ENCODE measurements at regions of chrX and their contacts with region 1.

Region 1: DNA sequence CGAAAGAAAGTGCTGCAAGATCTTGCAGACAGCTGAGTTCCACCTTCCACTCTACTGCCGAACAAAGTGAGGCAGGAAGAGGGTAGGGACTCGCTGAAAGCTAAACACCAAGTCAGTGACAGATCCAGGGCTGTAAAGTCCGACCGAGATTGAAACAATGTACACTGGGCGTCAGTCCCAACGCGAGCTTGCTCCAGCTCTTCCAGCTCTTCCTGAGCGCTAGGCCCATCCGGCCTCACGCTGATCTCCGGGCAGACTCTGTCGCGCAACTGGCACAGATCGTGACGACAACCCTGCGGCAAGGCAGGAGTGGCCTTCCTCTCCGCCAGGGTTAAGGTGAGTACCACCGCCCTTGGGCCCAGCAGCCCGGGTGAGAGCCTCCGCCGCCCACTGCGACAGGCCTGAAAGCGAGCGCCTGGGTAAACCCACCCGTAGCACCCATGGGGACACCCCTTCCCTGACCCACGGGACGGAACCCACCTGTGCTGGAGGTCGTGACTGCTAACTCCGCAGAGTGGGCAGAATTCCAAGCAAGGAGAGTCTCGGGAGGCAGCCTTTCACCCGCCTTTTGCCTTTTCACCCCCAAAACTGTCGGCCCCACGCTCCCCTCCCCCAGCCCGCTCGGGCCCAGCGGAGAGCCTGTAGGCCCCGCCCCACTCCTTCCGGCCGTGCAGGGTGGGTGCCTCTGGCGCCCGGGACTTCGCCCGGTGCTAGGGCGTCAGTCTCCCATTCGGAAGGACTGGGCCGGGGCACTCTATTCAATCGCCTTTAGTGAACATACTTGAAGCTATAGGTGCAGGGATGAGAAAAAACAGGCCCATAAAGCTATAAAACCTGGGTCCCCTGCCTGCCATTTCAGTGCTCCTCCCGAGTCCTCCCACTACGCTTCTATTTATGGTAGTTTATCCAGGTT is at the start of gene TMLHE:
- DNase-seq: peak; percentile 42
- H3K4me3 Mint-ChIP-seq: peak within 1 kb of the TSS; percentile 92
- H3K27ac Mint-ChIP-seq: peak within 1 kb of the TSS; percentile 92
- H3K4me1 Mint-ChIP-seq: peaks cover 5% of the 10 kb centered on the region
- H3K27me3 Mint-ChIP-seq: no peaks in the 10 kb centered on the region
- total RNA-seq, gene TMLHE: 7.3 and 9.9 TPM in 2 replicates

Region 2: DNA sequence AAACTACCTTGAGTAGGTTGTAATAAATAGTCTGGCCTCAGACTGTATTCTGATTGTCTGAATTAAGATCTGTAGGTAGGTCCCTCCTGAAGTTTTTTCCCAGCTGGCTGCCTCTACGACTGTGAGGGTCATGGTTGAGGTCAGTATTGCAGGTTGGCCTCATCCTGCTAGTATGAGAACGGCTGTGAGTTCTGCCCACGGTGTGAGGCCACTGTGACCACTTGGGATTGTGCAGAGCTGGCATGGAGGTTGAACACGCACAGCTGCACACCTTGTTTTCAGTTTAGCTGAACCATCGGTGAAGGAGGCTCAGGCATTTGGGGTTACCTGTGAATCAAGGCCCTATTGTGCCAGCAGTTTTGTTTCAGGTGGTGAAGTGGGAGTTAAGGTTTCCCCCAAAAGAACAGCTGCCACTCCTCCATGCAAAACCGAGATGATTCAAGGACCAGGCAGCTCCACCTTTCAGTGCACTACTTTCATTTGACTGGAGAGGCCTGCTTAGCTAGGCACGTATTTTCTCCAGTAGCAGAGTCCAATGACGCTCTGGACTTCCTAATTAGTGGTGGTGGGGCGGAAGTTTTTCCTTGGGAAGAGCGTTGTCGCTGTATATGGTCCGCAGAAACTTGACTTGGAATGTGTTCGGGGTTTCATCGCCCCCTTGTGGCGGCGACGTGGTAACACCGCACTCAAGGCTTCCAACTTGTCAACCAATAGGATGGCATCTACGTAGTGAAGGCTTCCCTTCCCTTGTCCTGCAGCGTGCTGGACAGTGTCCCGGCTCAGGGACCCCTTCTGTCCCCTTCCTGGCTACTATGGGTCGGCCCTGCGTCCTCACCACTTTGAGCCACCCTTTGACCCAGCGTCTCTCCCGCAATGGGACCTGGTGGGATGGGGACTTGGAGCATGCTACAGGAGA is 555.4 kb before region 1 on chrX:
- intact Hi-C with region 1: no loop called
- DNase-seq: peak; percentile 22
- H3K4me3 Mint-ChIP-seq: peak overlapping the region; percentile 62
- H3K27ac Mint-ChIP-seq: no peak overlapping the region
- H3K4me1 Mint-ChIP-seq: peaks cover 35% of the 10 kb centered on the region
- H3K27me3 Mint-ChIP-seq: no peaks in the 10 kb centered on the region

Region 3: GRCh38 chrX:155263854-155264628 is 348.5 kb before region 1 on chrX and contains the start of gene RAB39B:
- intact Hi-C with region 1: loop called (anchors 5 kb)
- DNase-seq: peak; percentile 61
- H3K4me3 Mint-ChIP-seq: peak within 1 kb of the TSS; percentile 91
- H3K27ac Mint-ChIP-seq: peak within 1 kb of the TSS; percentile 57
- H3K4me1 Mint-ChIP-seq: peaks cover 22% of the 10 kb centered on the region
- H3K27me3 Mint-ChIP-seq: no peaks in the 10 kb centered on the region
- total RNA-seq, gene RAB39B: 11.4 and 12.5 TPM in 2 replicates

Region 4: DNA sequence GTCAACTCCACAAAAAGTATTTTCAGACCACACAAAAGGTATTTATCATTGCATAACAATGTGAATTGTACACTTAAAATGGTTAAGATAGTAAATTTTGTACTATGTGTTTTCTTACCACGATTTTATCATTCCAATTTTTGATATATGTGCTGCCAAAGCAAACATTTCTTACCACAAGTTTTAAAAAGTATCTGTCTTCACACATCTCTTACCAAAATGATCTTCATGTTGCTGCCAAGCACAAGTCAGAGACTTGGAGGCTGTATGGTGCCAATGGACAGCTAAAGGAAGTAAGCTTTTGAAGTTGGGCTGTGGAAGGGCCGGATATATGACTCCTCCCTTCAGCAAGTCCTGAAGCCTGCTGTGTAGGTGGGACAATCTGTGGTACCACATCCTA is 67.7 kb before region 1 on chrX:
- intact Hi-C with region 1: no loop called
- DNase-seq: no peak
- H3K4me3 Mint-ChIP-seq: no peak overlapping the region
- H3K27ac Mint-ChIP-seq: no peak overlapping the region
- H3K4me1 Mint-ChIP-seq: no peaks in the 10 kb centered on the region
- H3K27me3 Mint-ChIP-seq: no peaks in the 10 kb centered on the region

Region 5: DNA sequence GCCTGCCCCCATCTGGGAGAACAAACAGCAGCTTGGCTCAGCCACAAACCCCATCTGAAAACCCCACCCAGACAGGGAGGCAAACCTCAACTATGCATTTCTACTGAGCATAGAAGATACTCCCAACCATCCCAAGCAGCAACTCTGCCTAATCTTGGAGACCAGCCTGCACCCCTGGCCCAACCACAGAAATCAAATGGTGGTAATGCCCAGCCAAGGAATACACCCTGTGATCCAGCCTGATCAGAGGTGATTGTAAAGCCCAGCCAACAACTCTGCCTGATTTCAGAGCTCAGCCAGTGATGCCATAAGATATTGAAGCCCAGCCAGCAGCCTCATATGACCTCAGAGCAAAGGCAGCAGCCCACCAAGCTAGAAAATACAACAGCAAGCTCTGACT is 19.6 kb before region 1 on chrX:
- intact Hi-C with region 1: no loop called
- DNase-seq: no peak
- H3K4me3 Mint-ChIP-seq: no peak overlapping the region
- H3K27ac Mint-ChIP-seq: no peak overlapping the region
- H3K4me1 Mint-ChIP-seq: no peaks in the 10 kb centered on the region
- H3K27me3 Mint-ChIP-seq: no peaks in the 10 kb centered on the region

Region 6: GRCh38 chrX:155632386-155633100 is 20.0 kb after region 1 on chrX:
- intact Hi-C with region 1: loop called (anchors 1 kb)
- DNase-seq: peak; percentile 1
- H3K4me3 Mint-ChIP-seq: peak overlapping the region; percentile 38
- H3K27ac Mint-ChIP-seq: peak overlapping the region; percentile 63
- H3K4me1 Mint-ChIP-seq: peaks cover 10% of the 10 kb centered on the region
- H3K27me3 Mint-ChIP-seq: no peaks in the 10 kb centered on the region

Region 7: DNA sequence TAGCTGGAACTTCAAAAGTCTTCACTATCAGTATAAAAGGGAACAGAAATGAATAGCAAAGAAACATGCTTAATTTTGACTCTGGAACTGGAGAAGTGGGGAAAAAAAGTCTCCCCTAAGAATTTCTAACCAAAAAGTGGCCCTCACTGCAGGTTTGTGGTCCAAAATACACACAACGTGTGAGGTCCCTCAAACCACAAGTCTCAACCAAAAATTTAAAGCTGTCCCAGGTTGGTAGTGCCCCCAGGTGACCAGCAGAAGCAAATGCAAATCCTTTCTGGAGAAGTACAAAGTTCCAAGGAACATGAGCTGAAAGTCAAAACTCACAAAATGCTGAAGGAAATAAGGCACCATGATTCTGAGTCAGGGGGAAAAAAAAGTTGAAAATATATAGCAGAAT is 245.0 kb after region 1 on chrX:
- intact Hi-C with region 1: no loop called
- DNase-seq: no peak
- H3K4me3 Mint-ChIP-seq: no peak overlapping the region
- H3K27ac Mint-ChIP-seq: no peak overlapping the region
- H3K4me1 Mint-ChIP-seq: no peaks in the 10 kb centered on the region
- H3K27me3 Mint-ChIP-seq: peaks cover 4% of the 10 kb centered on the region